Cardiac septum (tissue), 1 donor: ENCODE measurements at regions of chr21 and their contacts with region 1.

Region 1: GRCh38 chr21:36976882-36977651 is 10.6 kb upstream of the HLCS start:
- DNase-seq: no peak

Region 2: GRCh38 chr21:36606287-36606982 is 370.6 kb before region 1 on chr21:
- intact Hi-C with region 1: no loop called
- DNase-seq: no peak

Region 3: GRCh38 chr21:37009740-37010341 is 32.8 kb after region 1 on chr21:
- intact Hi-C with region 1: loop called (anchors 5 kb)
- DNase-seq: peak; percentile 87

Region 4: DNA sequence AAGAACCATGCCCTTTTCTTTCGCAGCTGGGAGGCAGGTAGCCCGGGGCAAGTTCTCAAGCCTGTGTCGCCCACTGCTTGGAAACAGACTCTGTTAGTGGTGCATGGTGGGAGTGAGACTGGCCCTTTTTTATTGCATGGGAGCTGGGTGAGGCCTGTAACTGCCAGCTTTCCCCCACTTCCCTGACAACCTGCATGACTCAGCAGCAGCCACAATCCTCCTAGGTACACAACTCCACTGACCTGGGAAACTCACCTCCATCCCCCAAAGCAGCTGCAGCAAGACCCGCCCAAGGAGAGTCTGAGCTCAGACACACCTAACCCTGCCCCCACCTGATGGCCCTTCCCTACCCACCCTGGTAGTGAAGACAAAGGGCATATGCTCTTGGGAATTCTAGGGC is 70.0 kb after region 1 on chr21:
- intact Hi-C with region 1: no loop called
- DNase-seq: no peak